ENCODE measurements at regions of chr19 and their contacts with region 1.

Region 1: GRCh38 chr19:35716801-35717666 is 769 bp upstream of the KMT2B start:
- DNase-seq: peak; percentile 97
- ATAC-seq: peak; percentile 62
- H3K4me3 Mint-ChIP-seq: peak overlapping the region; percentile 83
- H3K27ac Mint-ChIP-seq: peak overlapping the region; percentile 100
- H3K4me1 Mint-ChIP-seq: peaks cover 30% of the 10 kb centered on the region
- H3K27me3 Mint-ChIP-seq: no peaks in the 10 kb centered on the region
- CTCF ChIP-seq: peak; percentile 91

Region 2: GRCh38 chr19:35528218-35529038 is 188.6 kb before region 1 on chr19 and contains the start of gene SBSN:
- CTCF ChIA-PET with region 1: no interaction called
- POLR2A ChIA-PET with region 1: no interaction called
- intact Hi-C with region 1: no loop called
- DNase-seq: no peak
- ATAC-seq: no peak
- H3K4me3 Mint-ChIP-seq: no peak within 1 kb of the TSS
- H3K27ac Mint-ChIP-seq: no peak within 1 kb of the TSS
- H3K4me1 Mint-ChIP-seq: peaks cover 5% of the 10 kb centered on the region
- H3K27me3 Mint-ChIP-seq: peaks cover 31% of the 10 kb centered on the region
- CTCF ChIP-seq: no peak
- total RNA-seq, gene SBSN: not detected

Region 3: DNA sequence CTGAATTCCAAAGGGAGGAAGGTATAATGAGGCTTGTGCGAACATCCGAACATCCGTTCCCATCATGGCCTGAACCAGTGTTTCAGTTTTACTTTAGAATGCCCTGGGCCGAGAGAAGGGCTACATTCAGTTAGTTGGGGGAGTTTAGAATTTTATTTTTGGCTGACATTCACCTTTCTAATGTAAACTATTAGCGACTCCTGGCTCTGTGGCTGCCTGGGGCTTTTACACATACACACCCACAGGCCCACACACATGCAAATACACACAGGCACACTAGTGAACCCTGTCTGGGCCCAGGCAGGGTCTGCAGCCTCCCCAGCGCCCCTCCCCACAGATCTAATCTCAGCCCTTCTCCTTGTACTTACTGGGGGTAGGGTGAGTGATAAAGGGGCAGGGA is 177.7 kb before region 1 on chr19:
- CTCF ChIA-PET with region 1: no interaction called
- POLR2A ChIA-PET with region 1: no interaction called
- intact Hi-C with region 1: no loop called
- DNase-seq: no peak
- ATAC-seq: no peak
- H3K4me3 Mint-ChIP-seq: no peak overlapping the region
- H3K27ac Mint-ChIP-seq: no peak overlapping the region
- H3K4me1 Mint-ChIP-seq: peaks cover 11% of the 10 kb centered on the region
- H3K27me3 Mint-ChIP-seq: no peaks in the 10 kb centered on the region
- CTCF ChIP-seq: no peak

Region 4: GRCh38 chr19:35693830-35694599 is 23.0 kb before region 1 on chr19:
- CTCF ChIA-PET with region 1: interaction called, 137 read pairs
- POLR2A ChIA-PET with region 1: interaction called, 215 read pairs
- intact Hi-C with region 1: loop called (anchors 1 kb)
- DNase-seq: peak; percentile 96
- ATAC-seq: peak; percentile 97
- H3K4me3 Mint-ChIP-seq: no peak overlapping the region
- H3K27ac Mint-ChIP-seq: peak overlapping the region; percentile 58
- H3K4me1 Mint-ChIP-seq: peaks cover 25% of the 10 kb centered on the region
- H3K27me3 Mint-ChIP-seq: no peaks in the 10 kb centered on the region
- CTCF ChIP-seq: peak; percentile 99

Region 5: GRCh38 chr19:35727053-35727947 is 10.3 kb after region 1 on chr19:
- CTCF ChIA-PET with region 1: no interaction called
- POLR2A ChIA-PET with region 1: interaction called, 55 read pairs
- intact Hi-C with region 1: no loop called
- DNase-seq: no peak
- ATAC-seq: no peak
- H3K4me3 Mint-ChIP-seq: no peak overlapping the region
- H3K27ac Mint-ChIP-seq: no peak overlapping the region
- H3K4me1 Mint-ChIP-seq: peaks cover 9% of the 10 kb centered on the region
- H3K27me3 Mint-ChIP-seq: no peaks in the 10 kb centered on the region
- CTCF ChIP-seq: no peak

Region 6: DNA sequence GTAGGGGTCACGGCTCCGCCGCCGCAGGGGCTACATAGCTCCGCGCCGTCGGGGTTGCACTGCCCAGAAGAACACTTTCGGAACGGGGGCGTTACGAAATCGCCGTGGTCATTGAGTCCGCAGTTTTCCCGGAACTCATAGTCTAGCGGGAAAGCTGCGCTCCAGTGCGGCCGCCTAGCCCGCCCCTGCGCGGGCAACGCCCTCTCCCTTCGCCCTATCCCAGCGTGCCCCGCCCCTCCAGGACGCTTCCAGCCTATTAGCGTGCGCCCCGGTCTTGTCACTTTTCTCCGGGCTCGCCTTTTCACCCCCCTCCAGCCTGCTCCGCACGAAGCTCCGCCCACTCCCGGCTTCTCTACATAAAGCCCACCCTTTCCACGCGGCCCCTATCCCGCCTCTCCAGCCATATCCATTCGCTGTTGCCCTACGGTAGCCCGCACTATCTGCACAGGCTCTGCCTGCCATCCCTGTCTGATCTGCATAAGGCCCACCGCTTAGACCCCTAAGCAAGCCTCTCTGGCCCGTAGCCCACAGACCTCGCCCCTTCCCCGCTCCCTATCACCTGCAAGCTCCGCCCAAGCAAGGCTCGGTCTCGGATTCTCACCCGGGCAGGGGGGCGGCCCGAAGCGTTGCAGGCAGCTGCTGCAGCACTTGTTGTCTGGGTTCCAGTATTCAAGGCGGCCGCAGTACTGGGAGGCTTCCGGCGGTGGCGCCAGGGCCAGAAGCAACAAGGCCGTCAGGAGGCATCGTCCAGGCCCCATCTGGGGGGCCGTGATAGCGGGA is 23.6 kb after region 1 on chr19:
- CTCF ChIA-PET with region 1: interaction called, 18 read pairs
- POLR2A ChIA-PET with region 1: interaction called, 105 read pairs
- intact Hi-C with region 1: loop called (anchors 5 kb)
- DNase-seq: peak; percentile 99
- ATAC-seq: peak; percentile 72
- H3K4me3 Mint-ChIP-seq: peak overlapping the region; percentile 87
- H3K27ac Mint-ChIP-seq: peak overlapping the region; percentile 96
- H3K4me1 Mint-ChIP-seq: peaks cover 24% of the 10 kb centered on the region
- H3K27me3 Mint-ChIP-seq: no peaks in the 10 kb centered on the region
- CTCF ChIP-seq: no peak

Region 7: DNA sequence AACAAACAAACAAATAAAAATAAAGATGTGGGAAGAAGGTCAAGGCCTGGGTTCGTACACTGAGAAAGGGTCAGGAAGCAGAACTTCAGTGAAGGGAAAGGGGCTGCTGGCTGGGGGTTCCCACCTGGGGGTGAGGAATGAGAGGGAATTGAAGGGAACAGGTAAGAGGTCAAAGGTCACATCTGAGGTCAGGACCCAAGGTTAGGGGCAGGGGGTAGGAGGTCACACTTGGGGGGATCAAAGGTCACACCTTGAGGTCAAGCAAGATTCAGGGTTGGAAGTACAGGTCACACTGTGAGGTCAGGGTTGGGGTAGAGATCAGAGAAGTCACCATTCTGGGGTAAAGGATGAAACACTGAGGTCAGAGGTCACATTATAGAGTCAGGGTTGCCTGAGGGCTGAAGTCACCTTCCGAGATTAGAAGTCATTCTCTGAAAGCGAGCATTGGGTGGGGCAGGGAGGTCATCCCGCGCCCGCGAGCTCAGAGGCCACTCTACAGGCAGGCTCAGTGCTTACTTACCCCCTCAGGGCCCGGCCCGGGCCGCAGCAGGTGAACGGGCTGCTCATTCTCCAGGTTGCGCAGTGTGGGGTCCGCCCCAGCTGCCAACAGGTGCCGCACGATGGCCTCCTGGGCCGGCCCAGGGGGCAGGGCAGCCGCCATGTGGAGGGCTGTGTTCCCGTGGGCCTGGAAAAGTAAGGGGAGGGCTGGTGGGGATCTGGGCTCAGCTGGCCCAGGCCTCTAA is 172.5 kb after region 1 on chr19:
- CTCF ChIA-PET with region 1: no interaction called
- POLR2A ChIA-PET with region 1: no interaction called
- intact Hi-C with region 1: no loop called
- DNase-seq: no peak
- ATAC-seq: no peak
- H3K4me3 Mint-ChIP-seq: no peak overlapping the region
- H3K27ac Mint-ChIP-seq: no peak overlapping the region
- H3K4me1 Mint-ChIP-seq: peaks cover 14% of the 10 kb centered on the region
- H3K27me3 Mint-ChIP-seq: no peaks in the 10 kb centered on the region
- CTCF ChIP-seq: no peak

Region 8: GRCh38 chr19:35931161-35931873 is 214.3 kb after region 1 on chr19:
- CTCF ChIA-PET with region 1: no interaction called
- POLR2A ChIA-PET with region 1: interaction called, 3 read pairs
- intact Hi-C with region 1: loop called (anchors 10 kb)
- DNase-seq: peak; percentile 99
- ATAC-seq: peak; percentile 98
- H3K4me3 Mint-ChIP-seq: peak overlapping the region; percentile 76
- H3K27ac Mint-ChIP-seq: peak overlapping the region; percentile 91
- H3K4me1 Mint-ChIP-seq: peaks cover 28% of the 10 kb centered on the region
- H3K27me3 Mint-ChIP-seq: no peaks in the 10 kb centered on the region
- CTCF ChIP-seq: peak; percentile 82

Measured in activated CD8-positive, alpha-beta T cell treated with anti-CD3 and anti-CD28 coated beads for 36 hours (primary cell).